A549 (cell line): ENCODE measurements at regions of chr2 and their contacts with region 1.

Region 1: DNA sequence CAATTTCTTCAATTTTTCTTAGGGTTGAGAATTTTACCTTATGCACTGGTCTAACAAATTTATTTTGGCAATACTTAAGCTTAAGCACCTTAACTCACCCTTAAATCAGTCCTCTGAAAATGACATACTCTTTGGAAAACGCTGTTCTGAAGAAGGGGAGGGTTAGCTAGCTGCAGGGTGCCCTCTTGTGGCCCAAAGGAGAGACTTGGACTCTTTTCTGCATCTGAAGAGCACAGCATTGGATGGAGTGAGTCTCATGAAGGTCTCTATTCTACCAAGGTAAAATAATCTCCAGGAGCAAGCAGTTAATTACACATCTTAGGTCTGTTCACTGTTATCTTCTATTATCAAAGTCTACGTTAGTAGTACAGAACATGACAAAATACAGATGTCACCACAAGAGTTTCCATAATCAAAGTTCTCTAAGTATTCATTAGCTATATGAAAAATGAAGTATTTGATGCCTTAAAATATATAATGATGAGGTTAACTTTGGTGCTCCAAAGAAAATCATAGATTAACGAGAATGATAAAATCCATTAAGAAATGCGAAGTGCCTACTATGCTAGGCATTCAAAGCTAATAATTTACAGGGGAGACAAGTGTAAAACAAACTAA is 24.4 kb downstream of the PUM2 start:
- DNase-seq: peak; percentile 50 to 66
- ATAC-seq: peak; percentile 97 to 98
- H3K4me3 ChIP-seq: no peak overlapping the region
- H3K27ac ChIP-seq: no peak overlapping the region
- H3K4me1 ChIP-seq: peaks cover 21% of the 10 kb centered on the region
- CTCF ChIP-seq: peak; percentile 95
- EP300 ChIP-seq: no peak
- POLR2A ChIP-seq: no peak
- RAD21 ChIP-seq: peak; percentile 69

Region 2: GRCh38 chr2:20080839-20081415 is 245.3 kb before region 1 on chr2:
- CTCF ChIA-PET with region 1: no interaction called
- POLR2A ChIA-PET with region 1: no interaction called
- DNase-seq: no peak
- ATAC-seq: peak in 1 of 2 experiments; percentile 47; a peak in 3 of 6 replicates
- H3K4me3 ChIP-seq: no peak overlapping the region
- H3K27ac ChIP-seq: peak overlapping the region in 1 of 2 experiments; percentile 42; a peak in 1 of 6 replicates
- H3K4me1 ChIP-seq: peaks cover 5% of the 10 kb centered on the region; the same call in 1 of the 3 replicates
- CTCF ChIP-seq: no peak
- EP300 ChIP-seq: no peak
- POLR2A ChIP-seq: no peak
- RAD21 ChIP-seq: no peak

Region 3: GRCh38 chr2:20106746-20107145 is 219.5 kb before region 1 on chr2:
- CTCF ChIA-PET with region 1: interaction called, 14 read pairs
- POLR2A ChIA-PET with region 1: no interaction called
- DNase-seq: no peak
- ATAC-seq: no peak
- H3K4me3 ChIP-seq: no peak overlapping the region
- H3K27ac ChIP-seq: no peak overlapping the region
- H3K4me1 ChIP-seq: peaks cover 32% of the 10 kb centered on the region
- CTCF ChIP-seq: peak; percentile 12; the same call in 1 of the 3 replicates
- EP300 ChIP-seq: no peak
- POLR2A ChIP-seq: no peak
- RAD21 ChIP-seq: no peak

Region 4: DNA sequence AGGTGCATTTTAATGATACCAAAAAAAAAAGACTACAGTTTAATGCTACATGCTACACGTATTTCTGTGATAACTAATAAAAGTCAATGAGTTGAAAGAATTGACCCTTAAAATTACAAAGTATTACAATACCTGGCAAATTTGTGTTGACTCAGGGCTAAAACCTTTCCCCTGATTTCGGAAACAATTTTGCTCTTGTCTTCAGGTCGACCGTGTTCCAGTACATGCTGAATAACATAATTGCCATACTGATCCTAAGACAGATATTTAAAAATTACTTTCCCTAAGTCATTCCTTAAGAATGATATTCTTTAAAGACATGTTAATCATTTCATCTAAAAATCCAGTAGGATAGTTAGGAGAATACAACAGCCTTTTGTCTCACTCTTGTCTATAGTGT is 71.5 kb before region 1 on chr2:
- CTCF ChIA-PET with region 1: no interaction called
- POLR2A ChIA-PET with region 1: no interaction called
- DNase-seq: no peak
- ATAC-seq: no peak
- H3K4me3 ChIP-seq: no peak overlapping the region
- H3K27ac ChIP-seq: no peak overlapping the region
- H3K4me1 ChIP-seq: no peaks in the 10 kb centered on the region
- CTCF ChIP-seq: no peak
- EP300 ChIP-seq: no peak
- POLR2A ChIP-seq: no peak
- RAD21 ChIP-seq: no peak

Region 5: DNA sequence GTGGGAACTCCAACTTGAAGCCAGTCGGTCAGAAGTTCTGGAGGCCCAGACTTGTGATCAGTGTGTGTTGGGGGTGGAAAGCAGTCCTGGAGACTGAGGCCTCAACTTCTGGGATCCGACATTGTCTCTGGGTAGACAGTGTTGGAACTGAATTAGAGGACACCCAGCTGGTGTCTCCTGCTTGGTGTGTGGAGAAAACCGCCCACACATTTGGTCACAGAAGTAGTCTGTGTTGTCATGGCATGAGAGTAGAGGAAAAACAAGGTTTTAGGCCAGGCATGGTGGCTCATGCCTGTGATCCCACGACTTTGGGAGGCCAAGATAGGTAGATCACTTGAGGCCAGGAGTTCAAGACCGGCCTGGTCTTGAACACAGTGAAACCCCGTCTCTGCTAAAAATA is 27.2 kb before region 1 on chr2:
- CTCF ChIA-PET with region 1: interaction called, 26 read pairs
- POLR2A ChIA-PET with region 1: no interaction called
- DNase-seq: no peak
- ATAC-seq: no peak
- H3K4me3 ChIP-seq: no peak overlapping the region
- H3K27ac ChIP-seq: no peak overlapping the region
- H3K4me1 ChIP-seq: no peaks in the 10 kb centered on the region
- CTCF ChIP-seq: no peak
- EP300 ChIP-seq: no peak
- POLR2A ChIP-seq: no peak
- RAD21 ChIP-seq: no peak

Region 6: DNA sequence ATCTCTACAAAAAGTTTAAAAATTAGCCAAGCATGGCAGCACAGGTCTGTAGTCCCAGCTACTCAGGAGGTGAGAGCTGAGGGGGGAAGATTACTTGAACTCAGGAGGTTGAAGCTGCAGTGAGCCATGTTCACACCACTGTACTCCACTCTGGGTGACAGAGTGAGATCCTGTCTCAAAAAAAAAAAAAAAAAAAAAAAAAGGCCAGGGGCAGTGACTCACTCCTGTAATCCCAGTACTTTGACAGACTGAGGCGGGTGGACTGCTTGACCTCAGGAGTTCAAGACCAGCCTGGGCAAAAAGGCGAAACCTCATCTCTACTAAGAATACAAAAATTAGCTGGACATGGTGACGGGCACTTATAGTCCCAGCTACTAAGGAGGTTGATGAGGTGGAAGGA is 12.6 kb before region 1 on chr2:
- CTCF ChIA-PET with region 1: interaction called, 30 read pairs
- POLR2A ChIA-PET with region 1: no interaction called
- DNase-seq: no peak
- ATAC-seq: peak in 1 of 2 experiments; percentile 63; a peak in 3 of 6 replicates
- H3K4me3 ChIP-seq: no peak overlapping the region
- H3K27ac ChIP-seq: no peak overlapping the region
- H3K4me1 ChIP-seq: peaks cover 4% of the 10 kb centered on the region; the same call in 1 of the 3 replicates
- CTCF ChIP-seq: no peak
- EP300 ChIP-seq: no peak
- POLR2A ChIP-seq: no peak
- RAD21 ChIP-seq: no peak

Region 7: DNA sequence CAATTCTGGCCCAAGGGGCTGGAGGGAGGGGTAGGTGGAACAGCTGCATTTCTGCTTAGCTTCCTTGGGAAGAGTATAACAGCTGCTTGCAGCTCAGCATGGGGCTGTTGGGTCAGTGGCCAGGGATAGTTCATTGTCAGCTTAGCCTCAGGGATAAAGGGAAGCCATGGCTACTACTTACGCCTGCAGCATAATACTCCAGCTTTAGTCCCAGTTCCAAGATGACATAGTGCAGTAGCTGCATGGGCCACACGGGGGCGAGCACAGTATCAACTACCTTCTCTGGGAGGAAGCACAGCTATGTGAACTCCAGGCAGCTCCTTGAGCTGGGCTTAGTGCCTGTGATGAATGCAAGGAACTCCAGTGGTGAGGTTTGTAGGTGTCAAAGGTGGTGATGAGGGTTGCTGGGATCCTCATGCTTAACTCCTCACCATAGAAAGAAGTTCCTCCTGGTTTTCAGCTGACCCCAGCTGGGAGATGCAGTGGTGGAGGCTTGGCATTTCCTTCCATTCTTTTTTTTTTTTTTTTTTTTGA is 85.2 kb after region 1 on chr2:
- CTCF ChIA-PET with region 1: interaction called, 11 read pairs
- POLR2A ChIA-PET with region 1: no interaction called
- DNase-seq: peak; percentile 79 to 86
- ATAC-seq: peak; percentile 100
- H3K4me3 ChIP-seq: no peak overlapping the region
- H3K27ac ChIP-seq: no peak overlapping the region
- H3K4me1 ChIP-seq: peaks cover 4% of the 10 kb centered on the region; the same call in 1 of the 3 replicates
- CTCF ChIP-seq: peak; percentile 81
- EP300 ChIP-seq: no peak
- POLR2A ChIP-seq: no peak
- RAD21 ChIP-seq: peak; percentile 79 to 86